AG04449 (cell line): ENCODE measurements at regions of chr1 and their contacts with region 1.

Region 1: DNA sequence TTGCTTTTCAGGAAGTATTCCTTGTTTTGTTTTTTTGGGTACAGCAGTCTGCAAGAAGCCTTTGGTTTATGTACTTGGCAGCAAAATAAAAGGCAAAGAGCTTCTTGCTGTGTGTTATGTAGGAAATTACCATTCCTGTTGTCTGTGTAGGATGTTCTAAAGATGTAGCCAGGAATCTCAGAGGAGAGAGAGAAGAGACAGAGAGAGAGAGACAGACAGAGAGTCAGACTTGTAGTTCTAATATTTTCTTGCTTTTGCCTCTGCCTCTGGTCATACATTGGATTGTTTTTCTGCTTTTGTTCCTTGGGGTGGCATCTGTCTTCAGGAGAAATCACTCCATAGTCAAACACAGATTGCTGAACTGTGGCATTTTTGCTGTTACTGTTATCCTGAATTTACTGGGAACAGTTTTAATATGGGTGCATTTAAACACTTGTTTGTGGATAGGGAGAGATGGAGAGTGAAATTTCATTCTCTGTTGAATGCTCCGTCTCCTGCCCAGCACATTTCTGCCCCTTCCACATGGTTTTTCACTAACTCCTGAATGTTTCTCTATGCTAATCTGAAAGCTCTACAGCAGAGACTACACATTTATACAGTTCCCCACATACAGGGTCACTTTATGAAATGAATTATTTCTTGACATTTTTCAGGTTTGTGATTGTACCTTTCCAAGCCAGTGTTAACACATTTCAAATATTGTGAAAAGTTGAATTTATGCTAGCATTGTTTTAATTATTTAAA is 49.8 kb downstream of the POU2F1 start:
- DNase-seq: no peak
- H3K4me3 ChIP-seq: no peak overlapping the region
- CTCF ChIP-seq: no peak

Region 2: GRCh38 chr1:167013108-167013929 is 257.2 kb before region 1 on chr1:
- CTCF ChIA-PET with region 1: no interaction called
- POLR2A ChIA-PET with region 1: no interaction called
- DNase-seq: no peak
- H3K4me3 ChIP-seq: no peak overlapping the region
- CTCF ChIP-seq: no peak

Region 3: DNA sequence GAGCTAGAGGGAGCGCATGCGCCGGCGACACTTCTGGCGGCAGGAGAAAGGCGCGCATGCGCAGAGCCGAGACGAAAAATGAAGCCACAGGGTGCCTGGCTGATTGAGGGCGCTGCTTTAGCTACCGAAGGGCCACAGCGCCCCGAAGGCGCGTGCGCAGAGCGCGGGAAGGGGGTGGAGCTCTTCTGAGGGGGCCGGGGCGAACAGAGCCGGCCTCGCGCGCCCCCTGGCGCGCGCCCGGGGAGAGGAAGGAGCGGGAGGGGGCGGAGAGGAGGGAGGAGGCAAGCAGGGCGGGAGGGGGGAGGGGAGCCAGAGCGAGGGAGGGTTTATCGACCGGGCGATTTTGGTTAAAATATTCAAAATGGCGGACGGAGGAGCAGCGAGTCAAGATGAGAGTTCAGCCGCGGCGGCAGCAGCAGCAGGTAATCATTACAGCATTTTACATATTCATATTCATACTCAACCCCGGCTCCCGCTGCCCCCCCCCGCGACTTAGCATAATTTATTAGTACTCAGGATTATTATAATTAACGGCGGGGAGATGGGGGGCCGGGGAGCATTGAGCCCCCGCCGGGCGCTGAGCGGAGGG is 49.9 kb before region 1 on chr1 and contains the start of gene POU2F1:
- CTCF ChIA-PET with region 1: interaction called, 14 read pairs
- POLR2A ChIA-PET with region 1: no interaction called
- DNase-seq: peak; percentile 78
- H3K4me3 ChIP-seq: peak within 1 kb of the TSS; percentile 73
- CTCF ChIP-seq: peak; percentile 78

Region 4: DNA sequence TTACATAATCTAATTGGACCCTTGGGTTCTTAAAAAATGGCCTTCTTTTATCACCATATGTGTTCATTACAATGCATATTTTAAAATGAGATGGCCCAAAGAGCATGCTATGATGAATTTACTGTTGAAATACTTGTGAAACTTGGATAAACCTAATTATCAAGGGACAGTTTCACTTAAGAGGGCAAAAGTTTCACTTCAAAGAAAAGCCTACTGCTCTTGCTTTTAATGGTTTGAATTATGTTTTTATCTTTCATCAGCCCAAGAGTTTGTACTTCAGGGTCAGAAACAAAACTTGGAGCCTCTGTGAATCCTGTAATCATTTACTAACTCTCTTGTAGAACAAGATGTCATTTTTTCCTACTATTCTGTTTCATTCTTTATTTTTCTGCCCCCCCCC is 17.5 kb before region 1 on chr1:
- CTCF ChIA-PET with region 1: interaction called, 19 read pairs
- POLR2A ChIA-PET with region 1: no interaction called
- DNase-seq: no peak
- H3K4me3 ChIP-seq: no peak overlapping the region
- CTCF ChIP-seq: no peak

Region 5: DNA sequence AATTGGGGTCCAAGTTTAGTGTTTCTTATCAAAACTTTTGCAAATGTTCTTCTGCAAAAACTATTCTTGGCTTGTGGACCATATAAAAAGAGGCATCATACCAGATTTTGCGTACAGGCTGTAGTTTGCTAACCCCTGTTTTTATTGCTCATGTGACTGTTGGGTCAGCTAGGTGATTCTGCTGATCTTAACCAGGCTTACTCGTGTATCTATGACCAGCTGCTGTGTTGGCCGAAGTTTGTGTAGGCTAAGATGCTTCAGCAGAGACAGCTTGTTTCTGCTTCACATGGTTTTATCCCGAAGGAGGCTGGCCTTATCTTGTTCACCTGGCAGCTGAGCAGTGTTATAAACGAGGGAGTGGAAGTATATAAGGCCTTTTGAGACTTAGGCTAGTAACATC is 11.7 kb before region 1 on chr1:
- CTCF ChIA-PET with region 1: interaction called, 19 read pairs
- POLR2A ChIA-PET with region 1: no interaction called
- DNase-seq: no peak
- H3K4me3 ChIP-seq: no peak overlapping the region
- CTCF ChIP-seq: no peak

Region 6: GRCh38 chr1:167291539-167292185 is 21.1 kb after region 1 on chr1:
- CTCF ChIA-PET with region 1: interaction called, 15 read pairs
- POLR2A ChIA-PET with region 1: no interaction called
- DNase-seq: no peak
- H3K4me3 ChIP-seq: no peak overlapping the region
- CTCF ChIP-seq: no peak

Region 7: GRCh38 chr1:167533851-167534300 is 263.4 kb after region 1 on chr1:
- CTCF ChIA-PET with region 1: interaction called, 61 read pairs
- POLR2A ChIA-PET with region 1: no interaction called
- DNase-seq: no peak
- H3K4me3 ChIP-seq: no peak overlapping the region
- CTCF ChIP-seq: peak; percentile 84